HepG2 (cell line): ENCODE measurements at regions of chr9 and their contacts with region 1.

Region 1: GRCh38 chr9:100598641-100599145 is 20.8 kb downstream of the CAVIN4 start:
- DNase-seq: peak; percentile 69
- ATAC-seq: peak; percentile 82
- H3K4me3 ChIP-seq: peak overlapping the region; percentile 61 to 73 (median 62)
- H3K27ac ChIP-seq: no peak overlapping the region
- H3K4me1 ChIP-seq: peaks cover 24% of the 10 kb centered on the region
- H3K27me3 ChIP-seq: no peaks in the 10 kb centered on the region
- CTCF ChIP-seq: no peak
- EP300 ChIP-seq: no peak
- POLR2A ChIP-seq: peak in 1 of 2 experiments; percentile 53; a peak in 1 of 4 replicates
- RAD21 ChIP-seq: no peak

Region 2: GRCh38 chr9:99162759-99163364 is 1435.8 kb before region 1 on chr9:
- CTCF ChIA-PET with region 1: no interaction called
- POLR2A ChIA-PET with region 1: no interaction called
- in situ Hi-C with region 1: loop called (anchors 25 kb)
- intact Hi-C with region 1: no loop called
- DNase-seq: peak; percentile 43
- ATAC-seq: peak; percentile 25; the same call in 1 of the 3 replicates
- H3K4me3 ChIP-seq: no peak overlapping the region
- H3K27ac ChIP-seq: no peak overlapping the region
- H3K4me1 ChIP-seq: peaks cover 11% of the 10 kb centered on the region
- H3K27me3 ChIP-seq: no peaks in the 10 kb centered on the region; a peak in 1 of 5 replicates
- CTCF ChIP-seq: peak; percentile 75
- EP300 ChIP-seq: no peak
- POLR2A ChIP-seq: no peak
- RAD21 ChIP-seq: peak; percentile 63

Region 3: GRCh38 chr9:99906403-99907207 is 692.1 kb before region 1 on chr9 and contains the start of gene STX17:
- CTCF ChIA-PET with region 1: no interaction called
- POLR2A ChIA-PET with region 1: no interaction called
- in situ Hi-C with region 1: no loop called
- intact Hi-C with region 1: no loop called
- DNase-seq: peak; percentile 61
- ATAC-seq: peak; percentile 92
- H3K4me3 ChIP-seq: peak within 1 kb of the TSS; percentile 80 to 96 (median 83)
- H3K27ac ChIP-seq: peak within 1 kb of the TSS; percentile 92
- H3K4me1 ChIP-seq: peaks cover 21% of the 10 kb centered on the region
- H3K27me3 ChIP-seq: no peaks in the 10 kb centered on the region; a peak in 1 of 5 replicates
- CTCF ChIP-seq: peak; percentile 22
- EP300 ChIP-seq: no peak
- POLR2A ChIP-seq: peak; percentile 75 to 80; a peak in 3 of 4 replicates
- RAD21 ChIP-seq: peak; percentile 10; the same call in 1 of the 2 replicates
- total RNA-seq, gene STX17: 25.7 and 28.9 TPM in 2 replicates

Region 4: GRCh38 chr9:100134731-100135130 is 464.0 kb before region 1 on chr9:
- CTCF ChIA-PET with region 1: no interaction called
- POLR2A ChIA-PET with region 1: no interaction called
- in situ Hi-C with region 1: no loop called
- intact Hi-C with region 1: loop called (anchors 5 kb)
- DNase-seq: no peak
- ATAC-seq: no peak
- H3K4me3 ChIP-seq: no peak overlapping the region
- H3K27ac ChIP-seq: no peak overlapping the region
- H3K4me1 ChIP-seq: no peaks in the 10 kb centered on the region
- H3K27me3 ChIP-seq: no peaks in the 10 kb centered on the region
- CTCF ChIP-seq: no peak
- EP300 ChIP-seq: no peak
- POLR2A ChIP-seq: no peak
- RAD21 ChIP-seq: no peak

Region 5: DNA sequence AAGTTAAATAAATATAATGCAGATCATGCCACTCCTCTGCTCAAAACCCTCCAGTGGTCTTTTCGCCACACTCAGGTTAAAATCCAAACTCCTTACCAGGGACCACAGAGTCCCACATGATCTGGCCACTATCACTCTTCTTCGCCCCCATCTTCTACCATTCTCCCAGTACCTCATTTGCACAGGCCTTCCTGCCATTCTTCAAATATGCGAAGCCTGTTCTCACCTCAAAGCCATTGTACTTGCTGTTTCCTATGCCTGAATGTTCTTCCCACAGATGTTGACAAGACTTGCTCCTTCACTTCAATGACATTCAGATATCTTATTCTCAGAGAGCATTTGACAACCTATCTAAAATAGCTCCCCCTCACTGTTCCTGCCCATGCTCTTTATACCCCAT is 256.8 kb before region 1 on chr9:
- CTCF ChIA-PET with region 1: no interaction called
- POLR2A ChIA-PET with region 1: no interaction called
- in situ Hi-C with region 1: loop called (anchors 10 kb)
- intact Hi-C with region 1: no loop called
- DNase-seq: no peak
- ATAC-seq: no peak
- H3K4me3 ChIP-seq: no peak overlapping the region
- H3K27ac ChIP-seq: no peak overlapping the region
- H3K4me1 ChIP-seq: no peaks in the 10 kb centered on the region
- H3K27me3 ChIP-seq: no peaks in the 10 kb centered on the region
- CTCF ChIP-seq: no peak
- EP300 ChIP-seq: no peak
- POLR2A ChIP-seq: no peak
- RAD21 ChIP-seq: no peak

Region 6: DNA sequence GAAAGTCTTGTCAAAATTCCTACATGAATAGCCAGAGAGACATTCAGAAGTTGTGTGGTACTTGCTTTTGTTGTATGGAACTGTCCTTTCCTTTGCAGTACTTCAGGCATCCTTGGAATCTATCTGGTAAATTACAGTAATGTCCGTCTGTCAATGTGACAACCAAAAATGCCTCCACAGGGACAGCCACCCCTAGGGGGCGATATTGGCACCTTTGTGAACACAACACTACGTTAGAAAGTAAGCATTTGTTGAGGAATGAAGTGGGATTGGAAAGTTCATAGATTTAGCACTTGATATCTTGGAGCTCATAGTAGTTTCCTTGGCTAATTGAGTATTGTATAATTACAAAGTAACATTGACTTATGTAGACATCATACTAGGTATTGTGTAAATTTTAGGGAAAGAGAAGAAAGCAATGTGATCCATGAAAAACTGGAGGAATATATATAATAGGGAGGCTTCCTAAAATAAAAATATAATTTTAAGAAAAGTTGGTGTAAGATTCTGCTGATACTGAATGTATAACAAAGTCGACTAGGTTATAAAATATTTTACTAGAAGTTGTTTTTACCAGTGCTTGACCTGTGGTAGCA is 93.0 kb before region 1 on chr9:
- CTCF ChIA-PET with region 1: interaction called, 3 read pairs
- POLR2A ChIA-PET with region 1: no interaction called
- in situ Hi-C with region 1: loop called (anchors 5 kb)
- intact Hi-C with region 1: loop called (anchors 1 kb)
- DNase-seq: peak; percentile 67
- ATAC-seq: peak; percentile 87
- H3K4me3 ChIP-seq: no peak overlapping the region
- H3K27ac ChIP-seq: no peak overlapping the region
- H3K4me1 ChIP-seq: no peaks in the 10 kb centered on the region
- H3K27me3 ChIP-seq: no peaks in the 10 kb centered on the region
- CTCF ChIP-seq: peak; percentile 80
- EP300 ChIP-seq: no peak
- POLR2A ChIP-seq: no peak
- RAD21 ChIP-seq: peak; percentile 31; the same call in 1 of the 2 replicates

Region 7: GRCh38 chr9:101119206-101119819 is 520.6 kb after region 1 on chr9:
- CTCF ChIA-PET with region 1: no interaction called
- POLR2A ChIA-PET with region 1: no interaction called
- in situ Hi-C with region 1: no loop called
- intact Hi-C with region 1: loop called (anchors 10 kb)
- DNase-seq: peak; percentile 57
- ATAC-seq: peak; percentile 100
- H3K4me3 ChIP-seq: no peak overlapping the region
- H3K27ac ChIP-seq: no peak overlapping the region
- H3K4me1 ChIP-seq: peaks cover 6% of the 10 kb centered on the region; the same call in 1 of the 2 replicates
- H3K27me3 ChIP-seq: no peaks in the 10 kb centered on the region
- CTCF ChIP-seq: peak; percentile 99
- EP300 ChIP-seq: no peak
- POLR2A ChIP-seq: no peak
- RAD21 ChIP-seq: peak; percentile 95

Region 8: GRCh38 chr9:101530077-101530711 is 931.5 kb after region 1 on chr9:
- CTCF ChIA-PET with region 1: no interaction called
- POLR2A ChIA-PET with region 1: no interaction called
- in situ Hi-C with region 1: no loop called
- intact Hi-C with region 1: loop called (anchors 5 kb)
- DNase-seq: peak; percentile 67
- ATAC-seq: peak; percentile 45
- H3K4me3 ChIP-seq: no peak overlapping the region
- H3K27ac ChIP-seq: no peak overlapping the region
- H3K4me1 ChIP-seq: peaks cover 13% of the 10 kb centered on the region
- H3K27me3 ChIP-seq: no peaks in the 10 kb centered on the region; a peak in 2 of 5 replicates
- CTCF ChIP-seq: peak; percentile 81
- EP300 ChIP-seq: no peak
- POLR2A ChIP-seq: no peak
- RAD21 ChIP-seq: peak; percentile 47; the same call in 1 of the 2 replicates